Activated CD8-positive, alpha-beta memory T cell treated with anti-CD3 and anti-CD28 coated beads, Interleukin-2, amount 10 ng/mL, durations not matched to agents 7 days and 5 days (primary cell): ENCODE measurements at regions of chr22 and their contacts with region 1.

Region 1: GRCh38 chr22:20418211-20418788 is 19.3 kb downstream of the SCARF2 start:
- DNase-seq: peak; percentile 80
- ATAC-seq: peak; percentile 90
- H3K4me3 Mint-ChIP-seq: peak overlapping the region; percentile 51
- H3K27ac Mint-ChIP-seq: no peak overlapping the region
- H3K4me1 Mint-ChIP-seq: peaks cover 3% of the 10 kb centered on the region
- H3K27me3 Mint-ChIP-seq: peaks cover 15% of the 10 kb centered on the region

Region 2: GRCh38 chr22:20407829-20408228 is 10.5 kb before region 1 on chr22:
- CTCF ChIA-PET with region 1: interaction called, 16 read pairs
- DNase-seq: peak; percentile 38
- ATAC-seq: no peak
- H3K4me3 Mint-ChIP-seq: no peak overlapping the region
- H3K27ac Mint-ChIP-seq: no peak overlapping the region
- H3K4me1 Mint-ChIP-seq: peaks cover 9% of the 10 kb centered on the region
- H3K27me3 Mint-ChIP-seq: no peaks in the 10 kb centered on the region

Region 3: GRCh38 chr22:20448630-20449029 is 30.3 kb after region 1 on chr22:
- CTCF ChIA-PET with region 1: interaction called, 84 read pairs
- DNase-seq: no peak
- ATAC-seq: no peak
- H3K4me3 Mint-ChIP-seq: no peak overlapping the region
- H3K27ac Mint-ChIP-seq: no peak overlapping the region
- H3K4me1 Mint-ChIP-seq: peaks cover 4% of the 10 kb centered on the region
- H3K27me3 Mint-ChIP-seq: no peaks in the 10 kb centered on the region

Region 4: GRCh38 chr22:20463324-20464095 is 45.2 kb after region 1 on chr22:
- CTCF ChIA-PET with region 1: interaction called, 23 read pairs
- DNase-seq: peak; percentile 68
- ATAC-seq: peak; percentile 64
- H3K4me3 Mint-ChIP-seq: peak overlapping the region; percentile 48
- H3K27ac Mint-ChIP-seq: peak overlapping the region; percentile 95
- H3K4me1 Mint-ChIP-seq: peaks cover 35% of the 10 kb centered on the region
- H3K27me3 Mint-ChIP-seq: no peaks in the 10 kb centered on the region

Region 5: GRCh38 chr22:20568989-20569769 is 150.9 kb after region 1 on chr22:
- CTCF ChIA-PET with region 1: interaction called, 20 read pairs
- DNase-seq: peak; percentile 95
- ATAC-seq: peak; percentile 77
- H3K4me3 Mint-ChIP-seq: peak overlapping the region; percentile 45
- H3K27ac Mint-ChIP-seq: peak overlapping the region; percentile 93
- H3K4me1 Mint-ChIP-seq: peaks cover 77% of the 10 kb centered on the region
- H3K27me3 Mint-ChIP-seq: no peaks in the 10 kb centered on the region